ENCODE measurements at regions of chr1 and their contacts with region 1.

Region 1: GRCh38 chr1:15028102-15028501 is 125.4 kb upstream of the TMEM51 start:
- DNase-seq: peak; percentile 61
- H3K4me3 ChIP-seq: no peak overlapping the region
- H3K27ac ChIP-seq: peak overlapping the region; percentile 41
- H3K4me1 ChIP-seq: peaks cover 30% of the 10 kb centered on the region
- H3K27me3 ChIP-seq: no peaks in the 10 kb centered on the region
- CTCF ChIP-seq: no peak

Region 2: GRCh38 chr1:14567056-14567455 is 461.0 kb before region 1 on chr1:
- CTCF ChIA-PET with region 1: no interaction called
- dilution Hi-C with region 1: no loop called
- in situ Hi-C with region 1: no loop called
- intact Hi-C with region 1: loop called (anchors 1 kb)
- DNase-seq: peak; percentile 12
- H3K4me3 ChIP-seq: no peak overlapping the region
- H3K27ac ChIP-seq: no peak overlapping the region
- H3K4me1 ChIP-seq: no peaks in the 10 kb centered on the region
- H3K27me3 ChIP-seq: no peaks in the 10 kb centered on the region
- CTCF ChIP-seq: peak; percentile 25 to 45

Region 3: DNA sequence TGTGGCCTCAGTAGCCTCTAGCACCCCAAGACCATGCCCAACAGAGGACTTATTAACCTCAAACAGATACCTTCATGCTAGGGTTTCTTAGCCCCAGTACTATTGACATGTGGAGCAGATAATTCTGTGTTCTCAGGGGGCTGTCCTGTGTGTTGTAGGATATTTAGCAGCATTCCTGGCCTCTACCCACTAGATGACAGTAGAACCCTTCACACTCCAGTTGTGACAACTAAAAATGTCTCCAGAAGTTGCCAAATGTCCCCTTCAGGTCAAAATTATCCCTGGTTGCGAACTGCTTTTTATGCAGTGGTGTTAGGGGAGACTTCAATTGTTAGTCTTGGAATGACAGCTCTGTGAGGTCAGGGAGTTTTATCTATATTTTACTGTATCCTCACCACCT is 421.5 kb before region 1 on chr1:
- CTCF ChIA-PET with region 1: no interaction called
- dilution Hi-C with region 1: no loop called
- in situ Hi-C with region 1: loop called in 1 of 2 experiments (anchors 25 kb)
- intact Hi-C with region 1: loop called (anchors 1 kb)
- DNase-seq: no peak
- H3K4me3 ChIP-seq: no peak overlapping the region
- H3K27ac ChIP-seq: no peak overlapping the region
- H3K4me1 ChIP-seq: no peaks in the 10 kb centered on the region
- H3K27me3 ChIP-seq: no peaks in the 10 kb centered on the region
- CTCF ChIP-seq: peak; percentile 49 to 89

Region 4: DNA sequence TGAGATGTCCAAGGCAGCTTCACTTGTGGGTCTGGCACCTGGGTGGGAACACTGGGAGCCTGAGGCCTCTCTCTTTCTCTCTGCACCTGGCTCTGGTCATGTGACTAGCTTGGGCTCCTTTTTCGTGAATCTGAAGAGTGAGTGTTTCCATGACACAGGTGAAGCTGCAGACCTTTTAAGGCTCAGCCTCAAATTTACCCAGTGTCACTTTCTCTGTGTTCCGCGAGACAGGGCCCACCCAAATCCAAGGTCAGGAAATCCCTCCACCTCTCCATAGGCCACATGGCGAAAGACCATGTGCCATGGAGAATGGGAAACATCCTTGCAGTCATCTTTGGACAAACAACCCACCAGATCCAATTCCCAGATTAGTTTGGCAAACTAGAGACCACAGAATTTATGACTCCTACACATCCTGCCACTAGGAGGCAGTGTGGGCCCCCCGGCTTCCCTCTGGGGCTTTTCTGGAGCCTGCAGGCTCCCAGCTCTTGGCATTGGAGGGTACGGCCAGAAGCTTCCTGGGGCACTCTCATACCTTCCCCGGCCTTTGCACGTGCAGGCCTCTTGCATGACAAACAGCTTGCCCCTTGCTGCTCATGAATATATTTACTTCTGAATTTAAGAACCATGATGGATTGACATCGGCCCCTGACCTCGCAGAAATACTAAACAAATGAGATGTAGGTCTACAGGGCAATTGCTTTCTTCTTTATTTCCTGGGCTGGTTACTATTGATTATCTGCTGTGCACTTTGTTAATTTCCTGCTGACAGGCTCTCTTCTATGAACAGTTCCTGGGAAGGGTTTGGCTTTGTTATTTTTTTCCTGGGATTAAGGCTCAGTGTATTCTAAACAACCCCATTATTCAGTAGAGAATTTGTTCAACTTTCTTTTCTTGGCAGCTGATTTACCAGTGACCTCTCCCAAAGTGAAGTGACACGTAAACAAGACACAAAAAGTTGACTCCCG is 248.9 kb before region 1 on chr1:
- CTCF ChIA-PET with region 1: no interaction called
- dilution Hi-C with region 1: no loop called
- in situ Hi-C with region 1: loop called (anchors 10 to 25 kb)
- intact Hi-C with region 1: loop called (anchors 1 kb)
- DNase-seq: no peak
- H3K4me3 ChIP-seq: no peak overlapping the region
- H3K27ac ChIP-seq: no peak overlapping the region
- H3K4me1 ChIP-seq: no peaks in the 10 kb centered on the region
- H3K27me3 ChIP-seq: no peaks in the 10 kb centered on the region
- CTCF ChIP-seq: peak; percentile 72 to 78

Region 5: GRCh38 chr1:14913482-14914177 is 114.5 kb before region 1 on chr1:
- CTCF ChIA-PET with region 1: interaction called, 9 read pairs
- dilution Hi-C with region 1: no loop called
- in situ Hi-C with region 1: no loop called
- intact Hi-C with region 1: loop called (anchors 5 kb)
- DNase-seq: peak; percentile 85
- H3K4me3 ChIP-seq: no peak overlapping the region
- H3K27ac ChIP-seq: peak overlapping the region; percentile 77
- H3K4me1 ChIP-seq: peaks cover 40% of the 10 kb centered on the region
- H3K27me3 ChIP-seq: no peaks in the 10 kb centered on the region
- CTCF ChIP-seq: no peak

Region 6: GRCh38 chr1:14923727-14924452 is 104.2 kb before region 1 on chr1:
- CTCF ChIA-PET with region 1: interaction called, 4 read pairs
- dilution Hi-C with region 1: no loop called
- in situ Hi-C with region 1: loop called in 1 of 2 experiments (anchors 5 kb)
- intact Hi-C with region 1: loop called (anchors 1 kb)
- DNase-seq: peak; percentile 53
- H3K4me3 ChIP-seq: peak overlapping the region in 2 of 3 experiments; percentile 81 to 82
- H3K27ac ChIP-seq: no peak overlapping the region
- H3K4me1 ChIP-seq: peaks cover 22% of the 10 kb centered on the region
- H3K27me3 ChIP-seq: no peaks in the 10 kb centered on the region
- CTCF ChIP-seq: no peak